GM23248 (cell line): ENCODE measurements at regions of chr16 and their contacts with region 1.

Region 1: DNA sequence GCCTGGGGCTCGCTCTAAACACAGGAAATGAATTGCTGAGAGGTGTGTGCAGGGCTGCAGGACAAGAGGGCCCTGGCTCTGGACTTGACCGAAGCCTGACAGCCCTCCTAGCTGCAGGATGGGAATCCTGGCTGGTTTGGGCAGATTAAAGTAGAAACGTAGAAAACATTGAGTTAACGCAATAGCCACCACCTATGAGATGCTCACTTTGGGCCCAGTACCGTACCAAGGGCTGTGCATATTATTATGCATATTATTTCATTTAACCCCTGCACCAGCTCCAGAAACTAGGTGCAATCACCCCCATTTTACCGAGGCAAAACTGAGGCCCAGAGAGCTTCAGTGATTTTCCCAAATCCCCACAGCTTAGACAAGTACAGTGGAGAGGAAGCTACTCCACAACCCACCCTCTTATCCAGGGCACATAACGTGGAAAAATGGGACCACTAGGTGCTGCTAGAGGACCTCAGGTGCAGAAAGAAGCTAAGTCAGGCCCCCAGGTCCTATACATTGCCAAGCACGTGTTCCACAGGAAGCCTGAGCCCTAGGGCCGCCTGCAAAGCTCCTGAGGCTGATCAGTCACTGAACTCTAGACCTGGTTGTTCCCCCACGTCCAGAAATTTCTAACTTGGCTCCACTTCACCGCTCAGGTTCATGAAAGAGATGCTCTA is 79.2 kb downstream of the MYH11 start:
- DNase-seq: peak; percentile 39
- H3K4me3 ChIP-seq: no peak overlapping the region
- H3K27ac ChIP-seq: no peak overlapping the region
- H3K4me1 ChIP-seq: no peaks in the 10 kb centered on the region
- H3K27me3 ChIP-seq: peaks cover 20% of the 10 kb centered on the region; the same call in 1 of the 2 replicates

Region 2: DNA sequence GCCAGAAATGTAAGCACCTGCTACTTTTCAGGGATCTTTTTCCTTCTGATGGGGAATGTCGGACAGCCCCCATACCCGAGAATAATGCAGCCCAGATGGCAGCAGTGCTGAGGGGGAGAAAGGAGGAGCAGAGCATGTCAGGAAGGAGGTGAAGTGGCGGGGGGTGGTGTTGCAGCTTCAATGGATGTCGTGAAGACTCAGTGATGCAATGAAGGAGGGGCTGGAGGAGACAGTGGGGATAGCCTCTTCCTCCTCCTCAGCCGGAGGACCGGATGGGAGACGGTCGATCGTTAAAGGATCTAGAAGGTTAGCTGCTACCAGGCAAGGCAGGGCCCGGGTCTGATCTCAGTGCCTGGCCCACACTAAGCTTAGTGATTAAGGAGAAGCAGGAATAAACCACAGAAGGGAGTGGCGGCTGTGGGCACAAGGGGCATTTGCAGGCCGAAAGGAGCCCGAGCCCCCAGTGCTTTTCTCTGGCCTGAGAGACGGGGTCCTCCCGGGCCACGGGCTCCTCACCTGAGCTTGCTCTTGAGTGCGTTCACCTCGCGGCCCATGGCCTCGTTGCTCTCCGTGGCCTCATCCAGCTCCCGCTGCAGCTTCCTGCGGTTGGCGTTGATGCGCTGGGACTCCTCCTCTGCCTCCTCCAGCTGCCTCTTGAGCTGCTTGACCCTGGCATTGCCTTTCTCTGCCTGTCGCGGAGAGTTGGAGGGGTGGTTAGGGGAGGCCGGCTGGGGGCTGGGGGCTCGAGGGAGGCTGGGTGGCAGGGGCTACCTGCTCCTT is 63.1 kb before region 1 on chr16:
- in situ Hi-C with region 1: no loop called
- DNase-seq: no peak
- H3K4me3 ChIP-seq: no peak overlapping the region
- H3K27ac ChIP-seq: no peak overlapping the region
- H3K4me1 ChIP-seq: no peaks in the 10 kb centered on the region
- H3K27me3 ChIP-seq: no peaks in the 10 kb centered on the region

Region 3: GRCh38 chr16:15726715-15727114 is 51.0 kb before region 1 on chr16:
- in situ Hi-C with region 1: no loop called
- DNase-seq: no peak
- H3K4me3 ChIP-seq: no peak overlapping the region
- H3K27ac ChIP-seq: no peak overlapping the region
- H3K4me1 ChIP-seq: no peaks in the 10 kb centered on the region
- H3K27me3 ChIP-seq: no peaks in the 10 kb centered on the region

Region 4: GRCh38 chr16:15932939-15933338 is 155.3 kb after region 1 on chr16:
- in situ Hi-C with region 1: no loop called
- DNase-seq: no peak
- H3K4me3 ChIP-seq: no peak overlapping the region
- H3K27ac ChIP-seq: no peak overlapping the region
- H3K4me1 ChIP-seq: no peaks in the 10 kb centered on the region
- H3K27me3 ChIP-seq: no peaks in the 10 kb centered on the region

Region 5: GRCh38 chr16:15946257-15947044 is 168.8 kb after region 1 on chr16:
- in situ Hi-C with region 1: no loop called
- DNase-seq: peak; percentile 89
- H3K4me3 ChIP-seq: peak overlapping the region; percentile 16; the same call in 1 of the 2 replicates
- H3K27ac ChIP-seq: peak overlapping the region; percentile 85
- H3K4me1 ChIP-seq: peaks cover 22% of the 10 kb centered on the region
- H3K27me3 ChIP-seq: no peaks in the 10 kb centered on the region

Region 6: DNA sequence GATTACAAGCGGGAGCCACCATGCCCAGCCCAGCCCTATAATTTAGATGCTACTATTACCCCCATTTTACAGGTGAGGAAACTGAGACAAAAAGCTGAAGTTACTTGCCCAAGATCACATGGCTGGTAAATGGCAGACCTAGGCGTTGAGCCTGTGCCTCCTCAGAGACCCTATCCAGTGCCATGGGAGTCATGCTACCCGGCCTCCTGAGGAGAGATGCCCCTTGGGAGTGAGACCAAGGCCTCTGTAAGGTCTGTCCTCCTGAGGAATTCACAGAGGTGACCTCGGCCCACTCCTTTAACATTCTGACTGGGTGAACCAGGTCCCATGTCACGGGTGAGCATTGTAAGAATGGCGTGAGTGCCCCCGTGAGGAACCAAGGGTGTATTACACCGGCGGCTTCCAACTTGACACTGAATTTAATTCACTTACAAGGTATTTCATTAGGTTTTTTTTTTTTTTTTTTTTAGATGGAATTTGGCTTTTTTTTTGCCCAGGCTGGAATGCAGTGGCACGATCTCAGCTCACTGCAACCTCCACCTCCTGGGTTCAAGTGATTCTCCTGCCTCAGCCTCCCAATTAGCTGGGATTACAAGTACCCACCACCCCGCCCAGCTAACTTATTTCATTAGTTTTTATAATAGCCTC is 349.9 kb after region 1 on chr16:
- in situ Hi-C with region 1: loop called (anchors 10 kb)
- DNase-seq: peak; percentile 80
- H3K4me3 ChIP-seq: no peak overlapping the region
- H3K27ac ChIP-seq: no peak overlapping the region
- H3K4me1 ChIP-seq: no peaks in the 10 kb centered on the region
- H3K27me3 ChIP-seq: no peaks in the 10 kb centered on the region